PC-9 (cell line): ENCODE measurements at regions of chr18 and their contacts with region 1.

Region 1: DNA sequence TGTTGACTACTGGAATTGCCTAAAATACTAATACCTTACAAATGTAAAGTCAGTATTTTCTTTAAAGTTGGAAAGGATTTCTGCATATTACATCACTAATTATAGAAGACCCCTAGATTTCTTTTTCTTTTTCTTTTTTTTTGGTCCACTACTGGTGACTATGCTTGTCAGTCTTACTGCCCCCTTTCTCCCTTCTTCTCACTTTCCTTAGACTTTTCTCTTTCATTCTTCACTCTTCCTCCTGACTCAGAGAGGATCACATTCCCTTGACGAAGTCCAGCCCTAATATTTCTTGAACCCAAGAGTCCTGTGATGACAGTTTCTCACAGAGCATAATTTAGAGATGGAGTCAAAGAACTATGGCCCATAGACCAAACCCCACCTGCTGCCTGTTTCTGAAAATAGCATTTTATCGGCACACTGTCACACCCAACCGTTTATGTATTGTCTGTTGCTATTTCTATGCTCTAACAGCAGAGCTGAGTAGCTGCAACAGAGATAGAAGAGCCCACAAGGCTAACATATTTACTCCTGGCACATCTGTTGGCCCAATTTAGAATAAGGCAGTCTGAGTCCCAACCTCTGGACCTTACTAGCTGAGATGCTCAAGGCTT is 40.6 kb upstream of the RIOK3 start:
- DNase-seq: no peak
- H3K4me3 ChIP-seq: no peak overlapping the region
- H3K27ac ChIP-seq: no peak overlapping the region
- H3K4me1 ChIP-seq: peaks cover 17% of the 10 kb centered on the region
- H3K27me3 ChIP-seq: no peaks in the 10 kb centered on the region
- CTCF ChIP-seq: no peak

Region 2: DNA sequence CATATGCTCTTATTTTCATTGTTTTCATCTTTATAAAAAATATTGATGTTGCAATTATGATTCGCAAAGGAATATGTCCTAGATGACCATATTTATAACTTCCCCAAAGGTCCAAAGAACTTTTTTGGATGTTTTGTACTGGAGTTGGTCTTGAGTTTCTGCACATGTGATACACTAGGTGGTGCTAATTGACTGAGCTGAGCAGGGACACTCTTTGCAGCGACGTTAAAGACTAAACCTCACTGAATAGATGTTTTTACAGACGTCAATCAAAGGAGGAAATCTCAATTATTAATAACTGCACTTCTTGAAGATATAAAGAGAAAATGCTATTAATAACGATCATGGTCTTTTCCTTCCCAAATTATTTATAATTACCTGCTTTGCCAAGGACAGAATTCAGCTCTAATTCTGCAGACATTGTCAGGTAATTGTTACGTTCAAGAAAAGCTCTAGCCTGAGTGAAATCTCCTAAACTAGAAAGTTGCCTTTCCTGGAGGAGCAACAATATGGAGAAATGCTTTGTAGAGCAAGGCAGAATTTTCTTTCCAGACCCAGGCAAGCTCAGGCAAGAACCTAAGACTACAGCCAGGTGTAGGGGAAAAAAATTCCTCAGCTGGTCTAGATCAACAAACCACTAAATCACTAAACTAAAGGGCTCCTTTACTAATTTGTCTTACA is 598.7 kb before region 1 on chr18:
- CTCF ChIA-PET with region 1: no interaction called
- POLR2A ChIA-PET with region 1: no interaction called
- intact Hi-C with region 1: loop called (anchors 5 kb)
- DNase-seq: peak in 1 of 2 experiments; percentile 39
- H3K4me3 ChIP-seq: no peak overlapping the region
- H3K27ac ChIP-seq: no peak overlapping the region
- H3K4me1 ChIP-seq: 0 out of 2 replicates have a peak, but pooled peaks cover 5% of the 10 kb centered on the region
- H3K27me3 ChIP-seq: no peaks in the 10 kb centered on the region
- CTCF ChIP-seq: peak; percentile 72